PC-3 (cell line): ENCODE measurements at regions of chr7 and their contacts with region 1.

Region 1: GRCh38 chr7:65722345-65722792 is 150.5 kb upstream of the VKORC1L1 start:
- DNase-seq: peak; percentile 68
- ATAC-seq: peak; percentile 44
- H3K4me3 ChIP-seq: no peak overlapping the region
- H3K27ac ChIP-seq: no peak overlapping the region
- H3K4me1 ChIP-seq: 0 out of 2 replicates have a peak, but pooled peaks cover 2% of the 10 kb centered on the region
- H3K27me3 ChIP-seq: no peaks in the 10 kb centered on the region
- CTCF ChIP-seq: peak; percentile 77

Region 2: DNA sequence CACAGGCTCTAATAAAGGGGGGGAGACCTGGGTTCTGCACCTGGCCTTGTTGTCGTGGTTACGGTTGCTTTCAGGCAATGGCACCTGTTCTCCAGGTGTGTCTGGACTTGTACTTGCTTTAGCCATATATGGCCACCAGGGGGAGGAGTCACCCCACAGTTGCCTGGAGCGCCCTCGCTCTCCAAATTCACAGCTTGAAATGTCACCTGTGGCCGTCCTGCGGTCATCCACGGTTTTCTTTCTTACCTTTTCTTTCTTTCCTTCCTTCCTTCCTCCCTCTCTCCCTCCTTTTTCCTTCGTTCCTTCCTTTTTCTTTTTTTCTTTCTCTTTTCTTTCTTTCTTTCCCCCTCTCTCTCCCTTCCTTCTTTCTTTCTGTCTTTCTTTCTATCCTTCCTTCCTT is 505.9 kb before region 1 on chr7:
- CTCF ChIA-PET with region 1: interaction called, 21 read pairs
- POLR2A ChIA-PET with region 1: no interaction called
- intact Hi-C with region 1: no loop called
- DNase-seq: peak; percentile 65
- ATAC-seq: peak; percentile 43
- H3K4me3 ChIP-seq: no peak overlapping the region
- H3K27ac ChIP-seq: no peak overlapping the region
- H3K4me1 ChIP-seq: no peaks in the 10 kb centered on the region
- H3K27me3 ChIP-seq: no peaks in the 10 kb centered on the region
- CTCF ChIP-seq: peak; percentile 70

Region 3: DNA sequence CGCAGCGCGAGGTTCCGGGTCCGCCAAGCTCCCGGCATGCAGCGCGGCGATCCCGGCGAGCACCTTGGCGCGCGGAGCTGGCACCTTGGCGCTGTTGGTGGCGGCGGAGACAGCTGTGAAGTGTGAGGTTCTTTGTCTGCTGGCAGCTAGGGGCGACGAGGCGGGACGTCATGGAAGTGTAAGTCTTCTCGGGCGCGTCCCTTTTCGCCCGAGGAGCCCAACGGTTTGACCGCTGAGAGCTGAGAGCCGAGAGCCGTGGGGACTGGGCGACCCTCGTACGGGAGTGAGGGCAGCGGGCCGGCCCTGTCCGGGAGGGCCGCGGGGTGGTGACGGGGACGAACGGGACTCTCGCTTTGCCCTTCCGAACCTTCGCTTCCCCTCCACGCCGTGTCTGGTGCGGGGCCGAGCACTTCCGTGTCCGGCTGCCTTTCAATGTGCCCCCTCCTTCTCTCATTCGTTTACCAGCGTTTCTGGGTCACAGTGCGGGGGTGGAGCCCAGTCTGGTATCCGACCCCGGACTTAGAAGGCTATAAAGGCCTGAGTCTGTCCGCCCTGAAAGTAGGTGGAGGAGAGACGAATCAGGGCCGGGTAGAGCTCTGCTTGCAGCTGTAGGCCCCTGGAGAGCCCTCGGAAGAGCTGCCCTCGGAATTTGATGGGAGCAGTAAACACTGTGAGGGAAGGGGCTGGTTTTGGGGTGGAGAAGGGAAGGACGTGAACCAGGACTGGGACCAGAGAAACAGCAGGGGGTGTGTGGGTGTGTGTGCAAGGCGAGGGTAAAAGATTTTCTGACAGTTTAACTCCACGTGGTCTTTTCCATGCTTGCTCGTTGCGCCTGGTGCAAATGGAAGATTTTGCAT is 392.7 kb after region 1 on chr7 and contains the start of gene CRCP:
- CTCF ChIA-PET with region 1: no interaction called
- POLR2A ChIA-PET with region 1: no interaction called
- intact Hi-C with region 1: no loop called
- DNase-seq: peak; percentile 75
- ATAC-seq: peak; percentile 76
- H3K4me3 ChIP-seq: peak within 1 kb of the TSS; percentile 93
- H3K27ac ChIP-seq: peak within 1 kb of the TSS; percentile 96
- H3K4me1 ChIP-seq: peaks cover 49% of the 10 kb centered on the region
- H3K27me3 ChIP-seq: no peaks in the 10 kb centered on the region
- CTCF ChIP-seq: peak; percentile 48
- total RNA-seq, gene CRCP: 36.4 and 41.6 TPM in 2 replicates

Region 4: GRCh38 chr7:66265566-66265965 is 543.2 kb after region 1 on chr7:
- CTCF ChIA-PET with region 1: no interaction called
- POLR2A ChIA-PET with region 1: no interaction called
- intact Hi-C with region 1: no loop called
- DNase-seq: peak; percentile 25
- ATAC-seq: no peak
- H3K4me3 ChIP-seq: no peak overlapping the region
- H3K27ac ChIP-seq: no peak overlapping the region
- H3K4me1 ChIP-seq: no peaks in the 10 kb centered on the region
- H3K27me3 ChIP-seq: no peaks in the 10 kb centered on the region
- CTCF ChIP-seq: no peak